Activated CD4-positive, alpha-beta T cell treated with anti-CD3 and anti-CD28 coated beads for 36 hours (primary cell): ENCODE measurements at regions of chr12 and their contacts with region 1.

Region 1: DNA sequence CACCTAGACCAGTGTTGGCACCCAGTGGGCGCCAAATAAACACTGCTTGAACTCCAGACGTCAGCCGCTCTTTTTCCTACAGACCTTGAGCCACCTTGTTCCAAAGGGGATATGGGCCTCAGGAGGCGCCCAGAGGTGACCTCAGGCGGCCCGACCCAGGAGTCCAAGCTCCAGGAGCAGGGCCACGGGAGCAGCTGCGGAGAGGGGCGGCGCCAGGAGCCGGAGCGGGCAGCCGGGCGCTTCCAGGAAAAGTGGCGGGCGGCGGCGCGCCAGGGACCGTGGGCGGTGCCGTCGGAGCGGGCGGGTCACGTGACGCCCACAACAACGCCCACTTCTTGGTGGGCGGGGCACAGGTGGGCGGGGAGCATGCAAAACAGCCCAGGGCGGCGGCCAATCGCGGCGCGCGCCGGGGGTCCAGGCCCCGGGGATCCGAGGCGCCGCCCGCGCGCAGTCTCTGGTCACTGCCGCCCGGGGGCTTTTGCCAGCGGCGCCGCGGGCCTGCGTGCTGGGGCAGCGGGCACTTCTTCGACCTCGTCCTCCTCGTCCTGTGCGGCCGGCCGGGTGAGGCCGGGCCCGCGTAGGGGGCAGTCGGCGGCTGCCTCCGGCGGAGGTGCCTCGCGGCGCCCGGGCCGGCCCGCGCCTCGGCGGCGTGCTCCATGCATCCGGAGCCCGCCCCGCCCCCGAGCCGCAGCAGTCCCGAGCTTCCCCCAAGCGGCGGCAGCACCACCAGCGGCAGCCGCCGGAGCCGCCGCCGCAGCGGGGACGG is at the start of gene ORAI1:
- DNase-seq: peak; percentile 98
- ATAC-seq: peak; percentile 50
- H3K4me3 Mint-ChIP-seq: peak within 1 kb of the TSS; percentile 92
- H3K27ac Mint-ChIP-seq: peak within 1 kb of the TSS; percentile 99
- H3K4me1 Mint-ChIP-seq: peaks cover 36% of the 10 kb centered on the region
- H3K27me3 Mint-ChIP-seq: no peaks in the 10 kb centered on the region
- total RNA-seq, gene ORAI1: 29.4 to 35.9 TPM

Region 2: DNA sequence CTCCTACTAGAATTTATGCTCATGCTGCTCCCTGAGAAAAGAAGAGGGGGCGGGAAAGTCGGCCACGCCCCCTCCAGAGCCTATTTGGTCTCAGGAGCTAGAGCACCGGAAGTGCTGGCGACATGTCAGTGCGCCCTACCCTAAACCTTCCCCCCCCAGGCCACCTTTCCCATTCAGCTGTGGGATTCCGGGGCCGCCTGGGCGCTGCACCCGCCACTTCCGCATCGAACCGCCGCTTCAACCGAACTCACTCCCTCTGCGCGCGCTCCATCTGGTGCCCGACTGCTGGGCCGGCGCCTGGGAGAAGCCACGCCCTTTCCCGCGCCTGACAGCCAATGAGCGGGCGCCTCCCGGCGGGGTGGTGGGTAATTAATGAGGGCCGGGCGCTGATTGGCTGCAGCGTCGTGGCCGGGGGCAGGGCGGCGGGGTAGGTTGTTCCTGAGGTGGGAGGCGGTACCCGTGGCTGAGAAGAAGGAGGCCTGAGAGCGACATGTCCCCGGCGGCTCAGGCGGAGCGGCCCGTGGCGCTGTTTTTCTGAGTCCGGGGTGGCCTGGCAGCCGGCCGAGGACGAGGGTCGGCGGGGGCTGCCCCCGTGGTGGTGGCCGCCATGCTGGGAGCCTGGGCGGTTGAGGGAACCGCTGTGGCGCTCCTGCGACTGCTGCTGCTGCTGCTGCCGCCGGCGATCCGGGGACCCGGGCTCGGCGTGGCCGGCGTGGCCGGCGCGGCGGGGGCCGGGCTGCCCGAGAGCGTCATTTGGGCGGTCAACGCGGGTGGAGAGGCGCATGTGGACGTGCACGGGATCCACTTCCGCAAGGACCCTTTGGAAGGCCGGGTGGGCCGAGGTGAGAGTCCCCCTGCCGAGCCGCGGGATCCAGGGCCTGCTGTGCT is 939.3 kb before region 1 on chr12 and contains the start of gene MLEC:
- CTCF ChIA-PET with region 1: no interaction called
- POLR2A ChIA-PET with region 1: no interaction called
- intact Hi-C with region 1: loop called in 1 of 2 experiments (anchors 2 kb)
- DNase-seq: peak; percentile 99
- ATAC-seq: peak; percentile 86
- H3K4me3 Mint-ChIP-seq: peak within 1 kb of the TSS; percentile 92
- H3K27ac Mint-ChIP-seq: peak within 1 kb of the TSS; percentile 85
- H3K4me1 Mint-ChIP-seq: peaks cover 46% of the 10 kb centered on the region
- H3K27me3 Mint-ChIP-seq: no peaks in the 10 kb centered on the region
- total RNA-seq, gene MLEC: 70.6 to 89.5 TPM

Region 3: DNA sequence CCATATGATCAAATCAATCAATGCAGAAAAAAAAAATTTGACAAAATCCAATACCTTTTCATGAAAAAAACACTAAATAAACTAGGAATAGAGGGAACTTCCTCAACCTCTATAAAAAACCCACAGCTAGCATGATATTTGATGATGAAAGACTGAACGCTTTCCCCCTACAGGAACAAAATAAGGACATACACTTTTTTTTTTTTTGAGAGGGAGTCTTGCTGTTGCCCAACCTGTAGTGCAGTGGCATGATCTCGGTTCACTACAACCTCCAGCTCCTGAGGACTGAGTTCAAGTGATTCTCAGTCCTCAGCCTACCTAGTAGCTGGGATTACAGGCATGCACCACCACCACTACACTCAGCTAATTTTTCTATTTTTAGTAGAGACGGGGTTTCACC is 311.8 kb before region 1 on chr12:
- CTCF ChIA-PET with region 1: no interaction called
- POLR2A ChIA-PET with region 1: no interaction called
- intact Hi-C with region 1: no loop called
- DNase-seq: no peak
- ATAC-seq: no peak
- H3K4me3 Mint-ChIP-seq: no peak overlapping the region
- H3K27ac Mint-ChIP-seq: peak overlapping the region; percentile 33
- H3K4me1 Mint-ChIP-seq: peaks cover 16% of the 10 kb centered on the region
- H3K27me3 Mint-ChIP-seq: no peaks in the 10 kb centered on the region

Region 4: DNA sequence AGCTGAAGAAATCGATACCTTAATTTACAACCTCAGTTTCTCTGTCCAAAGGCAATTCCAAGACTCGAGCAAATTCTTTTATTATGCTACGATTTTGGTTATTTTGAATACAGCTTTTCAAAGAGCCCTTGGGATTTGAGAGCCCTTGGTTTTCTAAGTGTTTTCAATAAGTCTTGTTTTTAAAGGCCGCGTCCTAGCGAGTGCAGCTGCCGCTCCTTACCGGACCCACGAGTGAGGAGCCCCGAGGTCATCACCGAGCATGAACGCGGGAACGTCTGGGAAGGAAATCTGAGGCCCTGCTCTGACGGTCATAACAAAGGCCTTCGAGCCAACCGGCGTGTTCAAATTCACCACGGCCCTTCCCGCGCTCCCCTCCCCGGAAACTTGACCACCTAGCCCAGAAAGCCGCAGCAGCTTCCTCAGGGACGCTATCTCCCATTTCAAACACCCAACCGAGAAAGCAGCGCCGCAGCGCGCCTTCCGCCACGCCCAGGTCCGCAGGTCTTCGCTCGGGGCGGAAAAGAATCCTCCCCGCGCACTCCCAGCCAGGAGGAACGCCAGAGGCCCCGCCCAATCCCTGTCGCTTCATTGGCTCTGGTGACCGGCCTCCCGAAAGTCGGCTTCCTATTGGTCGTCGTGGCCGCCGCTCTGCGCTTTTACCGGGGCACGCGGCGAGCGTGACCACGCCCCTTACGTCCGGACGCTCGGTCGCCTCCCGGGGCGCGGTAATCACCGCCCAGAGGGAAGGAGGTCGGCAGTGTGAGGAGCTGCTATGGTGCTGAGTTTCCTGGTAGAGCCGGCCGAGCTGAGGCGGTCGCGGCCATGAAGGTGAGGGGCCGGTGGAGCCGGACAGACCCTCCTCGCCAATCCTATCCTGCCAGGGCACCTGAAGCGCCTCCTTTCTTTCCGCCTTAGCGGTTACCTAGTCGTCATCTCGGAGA is 226.6 kb before region 1 on chr12 and contains the start of gene RNF34:
- CTCF ChIA-PET with region 1: no interaction called
- POLR2A ChIA-PET with region 1: interaction called, 10 read pairs
- intact Hi-C with region 1: loop called in 1 of 2 experiments (anchors 2 kb)
- DNase-seq: peak; percentile 99
- ATAC-seq: peak; percentile 91
- H3K4me3 Mint-ChIP-seq: peak within 1 kb of the TSS; percentile 86
- H3K27ac Mint-ChIP-seq: peak within 1 kb of the TSS; percentile 93
- H3K4me1 Mint-ChIP-seq: peaks cover 33% of the 10 kb centered on the region
- H3K27me3 Mint-ChIP-seq: no peaks in the 10 kb centered on the region
- total RNA-seq, gene RNF34: 64.2 to 75.7 TPM

Region 5: DNA sequence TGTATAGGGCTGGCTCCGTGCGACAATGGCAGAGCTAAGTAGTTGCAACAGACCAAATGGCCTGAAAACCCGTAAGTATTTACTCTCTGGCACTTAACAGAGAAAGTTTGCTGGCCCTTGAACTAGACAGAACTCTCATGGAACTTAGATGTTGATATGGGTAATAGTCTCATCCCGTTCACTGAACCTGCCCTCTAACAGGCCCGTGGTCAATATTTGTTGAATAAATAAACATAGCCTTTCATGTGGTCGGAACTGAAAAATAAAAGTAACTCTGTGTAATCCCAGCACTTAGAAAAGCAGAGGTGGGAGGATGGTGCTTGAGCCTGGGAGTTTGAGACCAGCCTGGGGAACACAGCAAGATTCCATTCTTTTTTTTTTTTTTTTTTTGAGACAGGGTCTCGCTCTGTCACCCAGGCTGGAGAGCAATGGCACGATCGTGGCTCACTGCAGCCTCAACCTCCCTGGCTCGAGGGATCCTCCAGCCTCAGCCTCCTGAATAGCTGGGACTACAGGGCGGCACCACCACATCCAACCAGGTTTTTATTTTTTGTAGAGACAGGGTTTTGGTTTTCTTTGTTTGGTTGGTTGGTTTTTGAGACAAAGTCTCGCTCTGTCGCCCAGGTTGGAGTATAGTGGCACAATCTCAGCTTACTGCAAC is 75.2 kb before region 1 on chr12:
- CTCF ChIA-PET with region 1: interaction called, 18 read pairs
- POLR2A ChIA-PET with region 1: interaction called, 3 read pairs
- intact Hi-C with region 1: loop called (anchors 1 kb)
- DNase-seq: no peak
- ATAC-seq: no peak
- H3K4me3 Mint-ChIP-seq: no peak overlapping the region
- H3K27ac Mint-ChIP-seq: no peak overlapping the region
- H3K4me1 Mint-ChIP-seq: peaks cover 6% of the 10 kb centered on the region
- H3K27me3 Mint-ChIP-seq: no peaks in the 10 kb centered on the region

Region 6: DNA sequence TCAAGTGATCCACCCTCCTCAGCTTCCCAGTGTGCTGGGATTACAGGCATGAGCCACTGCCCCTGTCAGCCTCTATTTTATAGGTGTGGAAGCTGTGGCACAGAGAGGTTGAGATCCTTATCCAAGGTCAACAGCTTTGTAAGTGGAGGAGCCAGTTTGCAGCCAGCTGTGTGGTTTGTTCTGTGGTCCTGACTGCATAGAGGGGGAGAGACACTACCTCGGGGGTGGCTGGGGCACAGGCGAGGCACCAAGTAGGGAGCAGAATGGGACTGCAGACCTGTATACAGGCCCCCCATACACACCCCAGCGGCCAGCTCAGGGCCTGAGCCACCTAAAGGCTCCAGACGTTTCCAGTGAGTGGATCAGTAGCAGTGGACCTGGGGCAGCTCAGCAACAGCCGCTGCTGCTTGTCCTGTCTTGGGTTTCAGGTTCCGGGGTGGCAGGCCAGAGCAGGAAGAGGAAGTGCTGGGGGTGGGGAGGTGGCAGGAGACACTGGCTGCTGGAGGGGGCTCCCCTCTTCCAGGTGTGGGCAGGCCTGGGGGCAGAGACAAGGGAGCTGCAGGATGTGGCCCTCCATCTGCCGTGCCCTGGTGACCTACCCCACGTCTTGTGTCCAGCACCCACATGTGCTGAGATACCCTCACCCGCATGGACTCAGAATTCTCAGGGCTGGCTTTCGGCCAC is 11.1 kb after region 1 on chr12:
- CTCF ChIA-PET with region 1: interaction called, 14 read pairs
- POLR2A ChIA-PET with region 1: interaction called, 5 read pairs
- intact Hi-C with region 1: no loop called
- DNase-seq: peak; percentile 77
- ATAC-seq: peak; percentile 86
- H3K4me3 Mint-ChIP-seq: peak overlapping the region; percentile 63
- H3K27ac Mint-ChIP-seq: peak overlapping the region; percentile 91
- H3K4me1 Mint-ChIP-seq: peaks cover 53% of the 10 kb centered on the region
- H3K27me3 Mint-ChIP-seq: no peaks in the 10 kb centered on the region

Region 7: DNA sequence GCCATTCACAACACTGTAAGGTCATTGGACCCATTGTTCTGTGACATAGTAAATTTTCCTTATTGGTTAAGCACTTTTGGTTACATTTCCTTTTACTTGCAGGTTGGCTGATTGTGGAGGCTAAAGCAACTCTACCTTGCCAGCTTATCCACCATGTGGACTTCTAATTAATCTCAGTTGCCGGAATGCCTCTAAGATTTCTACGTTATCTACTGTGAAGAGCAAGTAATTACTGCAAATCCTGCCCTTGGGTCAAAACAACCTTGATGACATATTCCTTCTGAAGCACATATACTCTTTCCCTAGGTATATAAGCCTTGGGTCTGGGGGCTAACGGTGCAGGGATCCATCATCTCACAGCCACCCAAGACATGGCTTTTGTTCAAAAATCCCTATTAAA is 62.7 kb after region 1 on chr12:
- CTCF ChIA-PET with region 1: interaction called, 7 read pairs
- POLR2A ChIA-PET with region 1: no interaction called
- intact Hi-C with region 1: loop called (anchors 1 to 2 kb)
- DNase-seq: no peak
- ATAC-seq: no peak
- H3K4me3 Mint-ChIP-seq: no peak overlapping the region
- H3K27ac Mint-ChIP-seq: no peak overlapping the region
- H3K4me1 Mint-ChIP-seq: peaks cover 7% of the 10 kb centered on the region
- H3K27me3 Mint-ChIP-seq: no peaks in the 10 kb centered on the region

Region 8: DNA sequence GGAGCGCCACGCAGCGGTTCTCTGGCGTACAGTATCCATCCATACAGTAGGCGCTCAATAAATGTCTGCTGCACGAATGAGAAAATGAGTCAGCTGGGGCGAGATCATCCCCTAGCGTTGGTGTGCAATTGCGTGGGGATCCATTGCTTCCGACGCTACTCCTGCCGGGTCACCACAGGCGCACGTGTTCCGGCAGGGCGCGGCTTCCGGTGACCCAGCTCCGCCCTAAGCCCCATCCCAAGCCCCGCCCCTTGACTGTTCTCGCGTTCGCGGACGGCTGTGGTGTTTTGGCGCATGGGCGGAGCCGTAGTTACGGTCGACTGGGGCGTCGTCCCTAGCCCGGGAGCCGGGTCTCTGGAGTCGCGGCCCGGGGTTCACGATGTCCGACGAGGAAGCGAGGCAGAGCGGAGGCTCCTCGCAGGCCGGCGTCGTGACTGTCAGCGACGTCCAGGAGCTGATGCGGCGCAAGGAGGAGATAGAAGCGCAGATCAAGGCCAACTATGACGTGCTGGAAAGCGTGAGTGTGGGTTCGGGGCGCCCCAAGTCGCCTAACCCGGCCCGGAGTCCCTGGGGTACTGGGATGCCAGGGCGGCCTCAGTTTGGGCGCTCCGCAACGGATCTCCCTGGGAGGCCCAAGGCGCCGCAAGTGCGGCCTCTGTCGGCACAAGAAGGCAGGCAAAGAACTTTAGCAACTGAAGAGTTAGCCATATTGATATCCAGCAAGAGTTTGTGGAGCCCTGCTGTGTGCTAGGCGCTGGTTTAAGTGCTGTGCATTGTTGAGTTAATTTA is 262.4 kb after region 1 on chr12 and contains the start of gene PSMD9:
- CTCF ChIA-PET with region 1: no interaction called
- POLR2A ChIA-PET with region 1: no interaction called
- intact Hi-C with region 1: loop called (anchors 1 to 2 kb)
- DNase-seq: peak; percentile 99
- ATAC-seq: peak; percentile 94
- H3K4me3 Mint-ChIP-seq: peak within 1 kb of the TSS; percentile 89
- H3K27ac Mint-ChIP-seq: peak within 1 kb of the TSS; percentile 98
- H3K4me1 Mint-ChIP-seq: peaks cover 33% of the 10 kb centered on the region
- H3K27me3 Mint-ChIP-seq: no peaks in the 10 kb centered on the region
- total RNA-seq, gene PSMD9: 50.4 to 56.2 TPM

Region 9: GRCh38 chr12:121925358-121925695 is 299.1 kb after region 1 on chr12:
- CTCF ChIA-PET with region 1: no interaction called
- POLR2A ChIA-PET with region 1: no interaction called
- intact Hi-C with region 1: no loop called
- DNase-seq: no peak
- ATAC-seq: no peak
- H3K4me3 Mint-ChIP-seq: no peak overlapping the region
- H3K27ac Mint-ChIP-seq: no peak overlapping the region
- H3K4me1 Mint-ChIP-seq: no peaks in the 10 kb centered on the region
- H3K27me3 Mint-ChIP-seq: no peaks in the 10 kb centered on the region